GM10248 (cell line): ENCODE measurements at regions of chr17 and their contacts with region 1.

Region 1: DNA sequence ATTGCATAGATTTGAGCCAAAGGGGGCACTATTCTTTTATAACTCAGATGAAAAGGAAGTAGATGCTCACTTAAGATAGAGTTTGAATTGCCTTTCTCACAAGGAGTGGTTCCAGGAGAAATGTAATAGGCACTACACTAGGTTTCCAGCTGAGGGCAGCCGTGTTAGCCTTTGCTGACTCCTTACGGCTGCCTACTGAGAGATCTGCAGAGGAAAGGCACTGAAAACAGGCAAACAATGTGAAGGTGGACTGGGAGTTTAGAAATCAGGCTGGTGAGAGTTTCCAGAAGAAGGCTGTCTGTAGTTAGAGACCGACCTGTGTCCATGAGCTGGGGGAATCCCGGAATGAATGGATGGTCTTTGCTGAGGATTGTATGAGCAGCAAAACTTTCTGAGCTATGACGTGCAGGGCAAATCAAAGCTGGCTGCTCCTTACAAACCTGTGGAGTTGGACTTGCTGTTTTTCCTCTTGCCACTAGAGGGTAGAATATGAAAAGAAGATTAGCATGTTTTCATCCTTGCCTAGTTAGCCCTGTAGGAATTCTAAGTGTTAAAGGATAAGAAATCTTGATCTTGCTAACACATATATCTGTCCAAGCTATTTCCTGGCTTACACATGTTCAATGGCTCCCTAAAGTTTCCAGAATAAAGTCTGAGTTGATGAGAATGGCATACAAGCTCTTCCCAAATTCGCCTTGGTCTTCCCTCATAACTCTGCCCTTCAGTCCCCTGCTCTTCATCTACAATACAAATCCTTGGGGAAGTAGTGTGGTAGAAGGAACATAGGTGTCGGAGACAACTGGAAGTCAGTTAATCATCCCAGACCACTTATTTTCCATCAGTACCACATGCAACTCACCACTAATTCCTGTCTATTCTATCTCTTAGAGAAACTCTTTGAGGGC is 20.1 kb upstream of the TAOK1 start:
- DNase-seq: peak; percentile 73
- CTCF ChIP-seq: peak; percentile 77

Region 2: DNA sequence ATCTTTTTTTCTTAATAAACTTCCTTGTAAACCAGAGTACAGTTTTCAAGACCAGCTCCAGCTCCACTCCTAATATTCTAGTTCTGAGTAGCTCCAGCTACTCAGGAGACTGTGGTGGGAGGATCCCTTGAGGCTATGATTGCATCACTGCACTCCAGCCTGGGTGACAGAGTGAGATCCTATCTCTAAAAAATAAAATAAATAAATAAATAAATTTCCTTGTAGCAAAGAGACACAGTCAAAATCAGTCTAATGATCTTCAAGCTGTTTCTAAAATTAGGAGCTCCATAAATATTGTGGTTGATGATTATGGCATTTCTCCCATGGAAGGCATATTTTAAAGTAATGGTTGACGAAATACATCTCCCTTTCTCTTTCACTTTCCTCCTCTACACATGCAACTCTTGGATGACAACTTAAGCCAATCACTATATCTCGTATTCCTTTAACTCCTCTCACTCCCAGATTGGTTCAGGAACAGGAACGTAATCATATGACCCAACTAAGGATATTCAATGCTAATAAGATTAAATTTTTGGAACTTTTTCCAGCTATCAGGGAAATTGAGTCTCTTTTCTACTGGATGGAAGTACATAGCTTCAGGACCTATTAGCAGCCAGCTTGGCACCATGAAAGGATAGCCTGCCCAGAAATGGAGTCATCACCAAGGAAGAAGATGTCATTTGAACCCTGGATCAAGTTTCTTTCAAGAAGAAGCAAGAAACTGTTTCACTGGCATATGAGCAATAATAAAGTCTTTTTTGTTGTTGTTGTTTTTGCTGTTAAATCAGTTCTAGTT is 22.1 kb before region 1 on chr17:
- CTCF ChIA-PET with region 1: interaction called, 20 read pairs
- POLR2A ChIA-PET with region 1: no interaction called
- DNase-seq: no peak
- CTCF ChIP-seq: no peak

Region 3: GRCh38 chr17:29357821-29358232 is 12.3 kb before region 1 on chr17:
- CTCF ChIA-PET with region 1: interaction called, 16 read pairs
- POLR2A ChIA-PET with region 1: no interaction called
- DNase-seq: no peak
- CTCF ChIP-seq: no peak

Region 4: DNA sequence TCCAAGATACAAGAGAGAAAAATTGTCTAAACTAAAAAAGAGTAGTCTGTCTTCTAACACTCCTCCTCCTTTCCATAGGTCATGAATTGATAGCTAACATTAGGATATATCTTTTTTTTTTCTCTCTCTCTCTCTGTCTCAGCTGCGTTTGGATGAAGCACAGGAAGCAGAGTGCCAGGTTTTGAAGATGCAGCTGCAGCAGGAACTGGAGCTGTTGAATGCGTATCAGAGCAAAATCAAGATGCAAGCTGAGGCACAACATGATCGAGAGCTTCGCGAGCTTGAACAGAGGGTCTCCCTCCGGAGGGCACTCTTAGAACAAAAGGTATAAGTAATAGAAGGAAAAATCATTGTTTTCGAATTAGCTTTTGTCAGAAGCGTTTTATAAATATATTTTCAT is 163.9 kb after region 1 on chr17:
- CTCF ChIA-PET with region 1: interaction called, 31 read pairs
- POLR2A ChIA-PET with region 1: no interaction called
- DNase-seq: no peak
- CTCF ChIP-seq: no peak

Region 5: GRCh38 chr17:29561554-29562517 is 191.8 kb after region 1 on chr17:
- CTCF ChIA-PET with region 1: interaction called, 94 read pairs
- POLR2A ChIA-PET with region 1: no interaction called
- DNase-seq: no peak
- CTCF ChIP-seq: no peak

Region 6: DNA sequence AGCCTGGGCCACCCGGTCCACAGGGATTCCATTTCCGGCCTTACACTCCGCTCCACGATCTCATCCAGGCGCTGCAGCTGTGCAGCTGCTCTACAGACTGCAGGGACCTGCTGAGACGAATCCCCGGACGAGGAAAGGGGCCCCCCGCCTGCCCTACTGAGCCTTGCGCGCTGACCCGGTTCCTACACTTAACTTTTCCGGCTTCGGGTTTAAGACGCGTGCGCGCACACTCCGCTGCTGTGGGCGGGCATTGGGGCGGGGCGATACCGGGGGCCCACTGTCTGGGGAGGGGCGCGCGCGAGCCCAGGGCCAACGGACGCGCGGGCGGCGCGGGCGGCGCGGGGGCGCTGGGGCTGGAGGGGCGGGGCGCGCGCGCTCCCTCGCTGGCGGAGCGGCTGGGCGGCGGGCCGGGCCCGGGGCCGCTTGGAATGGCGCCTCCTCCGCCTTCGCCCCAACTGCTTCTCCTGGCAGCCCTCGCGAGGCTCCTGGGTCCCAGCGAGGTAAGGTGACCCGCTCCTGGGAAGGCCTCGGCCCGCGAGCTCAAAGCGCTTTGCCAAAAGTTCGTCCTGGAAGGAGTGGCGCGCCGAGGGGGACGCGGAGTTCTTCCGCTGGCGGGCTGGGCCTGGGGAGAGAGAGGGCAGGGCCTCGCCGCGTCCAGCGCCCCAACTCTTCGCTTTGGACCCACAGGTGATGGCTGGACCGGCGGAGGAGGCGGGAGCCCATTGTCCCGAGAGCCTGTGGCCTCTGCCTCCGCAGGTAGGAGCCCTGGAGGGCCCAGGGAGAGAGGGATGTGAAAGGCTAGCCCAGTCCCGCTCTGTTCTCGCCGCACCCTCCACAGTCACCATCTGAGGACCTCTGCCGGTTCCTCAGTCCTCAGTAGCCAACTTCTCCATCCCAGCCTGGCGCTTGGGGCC is 198.5 kb after region 1 on chr17 and contains the start of gene TP53I13:
- CTCF ChIA-PET with region 1: interaction called, 94 read pairs
- POLR2A ChIA-PET with region 1: no interaction called
- DNase-seq: peak; percentile 89
- CTCF ChIP-seq: no peak

Region 7: GRCh38 chr17:29589524-29590410 is 219.7 kb after region 1 on chr17 and contains the start of gene GIT1:
- CTCF ChIA-PET with region 1: interaction called, 28 read pairs
- POLR2A ChIA-PET with region 1: no interaction called
- DNase-seq: peak; percentile 95
- CTCF ChIP-seq: no peak